Posterior vena cava (tissue), 2 donors: ENCODE measurements at regions of chr1 and their contacts with region 1.

Region 1: DNA sequence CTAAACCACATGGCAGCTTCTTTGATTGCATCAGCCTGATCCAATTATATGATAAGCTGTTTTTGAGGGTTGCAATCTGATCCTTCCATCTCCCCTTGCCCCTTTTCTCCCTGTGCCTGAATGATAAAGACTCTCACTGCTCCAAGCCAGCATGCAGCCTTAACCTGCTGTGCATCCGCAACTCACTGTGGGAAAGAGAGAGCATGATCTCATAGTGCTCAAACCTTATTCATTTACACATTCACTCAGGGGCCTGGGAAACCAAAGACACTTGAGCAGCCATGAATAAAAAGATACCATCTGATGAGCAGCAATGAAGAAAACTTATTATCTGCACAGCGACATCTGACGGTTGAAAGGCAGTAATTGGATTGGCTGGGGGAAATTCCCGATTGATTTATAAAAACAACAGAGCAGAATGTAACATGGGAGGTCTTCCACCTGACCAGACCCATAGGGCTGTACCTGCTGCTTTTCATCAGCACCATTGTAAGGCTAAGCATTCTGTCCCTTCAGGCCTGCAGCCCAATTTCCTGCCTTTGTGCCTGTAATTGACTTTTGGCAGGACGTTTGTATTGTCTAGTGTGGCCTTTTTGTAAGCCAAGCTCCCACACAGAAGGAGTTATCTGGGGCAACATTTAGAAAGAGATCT is 62.5 kb downstream of the KIAA0040 start:
- DNase-seq: no peak

Region 2: DNA sequence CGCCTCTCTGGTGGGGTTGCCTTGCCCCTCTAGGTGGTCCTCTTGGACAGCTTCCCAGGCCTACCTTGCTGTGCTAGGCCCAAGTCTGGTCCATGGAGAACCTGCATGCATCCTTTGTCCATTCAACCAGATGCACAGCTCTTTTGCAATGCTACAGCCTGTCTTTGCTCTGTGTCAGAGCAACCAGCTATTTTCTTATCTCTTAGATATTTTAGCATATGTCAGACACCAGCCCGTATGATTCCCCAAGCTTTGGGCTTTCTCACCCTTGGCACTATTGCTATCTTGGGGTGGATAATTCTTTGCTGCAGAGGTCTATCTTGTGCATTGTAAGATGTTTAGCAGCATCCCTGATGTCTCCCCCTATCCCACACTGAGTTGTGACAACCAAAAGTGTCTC is 30.2 kb before region 1 on chr1:
- intact Hi-C with region 1: loop called in 1 of 2 experiments (anchors 1 kb)
- DNase-seq: no peak

Region 3: GRCh38 chr1:175118375-175119367 is 11.5 kb before region 1 on chr1:
- intact Hi-C with region 1: no loop called
- DNase-seq: no peak

Region 4: GRCh38 chr1:175217721-175218531 is 87.8 kb after region 1 on chr1:
- intact Hi-C with region 1: no loop called
- DNase-seq: no peak